ENCODE measurements at regions of chr3 and their contacts with region 1.

Region 1: GRCh38 chr3:174355505-174355904 is 503.6 kb upstream of the NAALADL2 start:
- DNase-seq: peak; percentile 81

Region 2: GRCh38 chr3:173617490-173617889 is 738.0 kb before region 1 on chr3:
- in situ Hi-C with region 1: no loop called
- DNase-seq: no peak

Region 3: DNA sequence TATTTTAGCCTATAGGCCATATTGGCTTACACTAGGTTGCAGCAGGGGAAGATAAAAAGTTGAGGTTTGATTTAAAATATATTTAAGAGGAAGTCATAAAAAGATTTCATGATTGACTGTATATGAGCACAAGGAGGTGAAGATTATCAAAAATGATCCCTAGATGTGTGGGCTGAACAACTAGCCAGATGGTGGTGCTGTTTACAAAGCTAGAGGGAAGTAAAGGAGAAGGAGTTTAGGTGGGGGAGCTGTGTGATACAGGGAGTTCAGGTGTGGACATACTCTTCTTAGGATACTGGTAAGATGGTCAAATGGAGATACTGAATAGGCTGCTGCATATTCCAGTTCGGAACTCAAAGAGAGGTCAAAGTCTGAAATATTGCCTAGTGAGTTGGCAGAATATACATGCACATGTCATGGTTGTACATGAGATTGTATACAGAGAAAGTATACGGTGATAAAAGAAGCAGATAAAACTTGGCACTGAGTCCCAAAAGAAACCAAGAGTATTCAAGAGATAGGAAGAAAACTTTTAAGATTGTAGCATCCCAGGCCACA is 230.2 kb before region 1 on chr3:
- in situ Hi-C with region 1: loop called (anchors 25 kb)
- DNase-seq: peak; percentile 84

Region 4: GRCh38 chr3:174229916-174230315 is 125.6 kb before region 1 on chr3:
- in situ Hi-C with region 1: no loop called
- DNase-seq: no peak